Mucosa of descending colon (tissue), 3 donors: ENCODE measurements at regions of chr12 and their contacts with region 1.

Region 1: GRCh38 chr12:118372541-118373495 is at the start of gene TAOK3:
- DNase-seq: peak; percentile 98 to 100 (median 98)
- ATAC-seq: peak; percentile 92
- H3K4me3 ChIP-seq: peak within 1 kb of the TSS; percentile 70
- H3K4me1 ChIP-seq: peaks cover 24% of the 10 kb centered on the region
- CTCF ChIP-seq: no peak
- total RNA-seq, gene TAOK3: 49.5 to 72.3 (median 52.8) TPM

Region 2: GRCh38 chr12:118183705-118184104 is 189.1 kb before region 1 on chr12:
- intact Hi-C with region 1: loop called (anchors 5 to 10 kb)
- DNase-seq: no peak
- ATAC-seq: no peak
- H3K4me3 ChIP-seq: no peak overlapping the region
- H3K4me1 ChIP-seq: peaks cover 7% of the 10 kb centered on the region
- CTCF ChIP-seq: no peak

Region 3: GRCh38 chr12:118189741-118190191 is 183.1 kb before region 1 on chr12:
- intact Hi-C with region 1: loop called (anchors 5 to 10 kb)
- DNase-seq: no peak
- ATAC-seq: no peak
- H3K4me3 ChIP-seq: no peak overlapping the region
- H3K4me1 ChIP-seq: peaks cover 7% of the 10 kb centered on the region
- CTCF ChIP-seq: no peak